ENCODE measurements at regions of chr7 and their contacts with region 1.

Region 1: GRCh38 chr7:135558337-135558767 is 635 bp downstream of the NUP205 start:
- DNase-seq: peak; percentile 89
- H3K4me3 Mint-ChIP-seq: no peak overlapping the region
- H3K27ac Mint-ChIP-seq: no peak overlapping the region
- H3K4me1 Mint-ChIP-seq: peaks cover 14% of the 10 kb centered on the region
- H3K27me3 Mint-ChIP-seq: peaks cover 2% of the 10 kb centered on the region

Region 2: GRCh38 chr7:134458806-134459698 is 1099.3 kb before region 1 on chr7 and contains the start of gene AKR1B1:
- intact Hi-C with region 1: loop called (anchors 5 kb)
- DNase-seq: peak; percentile 97
- H3K4me3 Mint-ChIP-seq: peak within 1 kb of the TSS; percentile 90
- H3K27ac Mint-ChIP-seq: peak within 1 kb of the TSS; percentile 83
- H3K4me1 Mint-ChIP-seq: peaks cover 39% of the 10 kb centered on the region
- H3K27me3 Mint-ChIP-seq: no peaks in the 10 kb centered on the region
- total RNA-seq, gene AKR1B1: 107 TPM in 2 replicates

Region 3: DNA sequence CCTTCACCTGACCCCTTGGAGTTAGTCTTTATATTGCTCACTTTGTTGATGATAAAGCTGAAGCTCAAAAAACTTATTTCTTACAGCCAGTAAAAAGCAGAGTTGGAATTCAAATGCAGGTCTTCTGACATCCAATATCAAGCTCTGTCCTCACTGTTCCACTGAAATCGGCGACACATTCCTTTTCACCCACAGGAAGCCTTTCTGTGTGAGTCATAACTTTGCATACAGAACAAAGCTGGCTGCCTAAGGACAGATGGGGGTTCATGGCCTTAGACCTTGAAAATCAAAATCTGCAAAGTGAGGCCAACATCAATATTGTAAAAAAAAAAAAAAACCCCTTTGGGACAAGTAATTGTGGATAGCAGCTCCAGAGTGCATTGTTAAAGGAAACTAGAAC is 1077.6 kb before region 1 on chr7:
- intact Hi-C with region 1: no loop called
- DNase-seq: no peak
- H3K4me3 Mint-ChIP-seq: no peak overlapping the region
- H3K27ac Mint-ChIP-seq: no peak overlapping the region
- H3K4me1 Mint-ChIP-seq: peaks cover 3% of the 10 kb centered on the region
- H3K27me3 Mint-ChIP-seq: peaks cover 10% of the 10 kb centered on the region

Region 4: DNA sequence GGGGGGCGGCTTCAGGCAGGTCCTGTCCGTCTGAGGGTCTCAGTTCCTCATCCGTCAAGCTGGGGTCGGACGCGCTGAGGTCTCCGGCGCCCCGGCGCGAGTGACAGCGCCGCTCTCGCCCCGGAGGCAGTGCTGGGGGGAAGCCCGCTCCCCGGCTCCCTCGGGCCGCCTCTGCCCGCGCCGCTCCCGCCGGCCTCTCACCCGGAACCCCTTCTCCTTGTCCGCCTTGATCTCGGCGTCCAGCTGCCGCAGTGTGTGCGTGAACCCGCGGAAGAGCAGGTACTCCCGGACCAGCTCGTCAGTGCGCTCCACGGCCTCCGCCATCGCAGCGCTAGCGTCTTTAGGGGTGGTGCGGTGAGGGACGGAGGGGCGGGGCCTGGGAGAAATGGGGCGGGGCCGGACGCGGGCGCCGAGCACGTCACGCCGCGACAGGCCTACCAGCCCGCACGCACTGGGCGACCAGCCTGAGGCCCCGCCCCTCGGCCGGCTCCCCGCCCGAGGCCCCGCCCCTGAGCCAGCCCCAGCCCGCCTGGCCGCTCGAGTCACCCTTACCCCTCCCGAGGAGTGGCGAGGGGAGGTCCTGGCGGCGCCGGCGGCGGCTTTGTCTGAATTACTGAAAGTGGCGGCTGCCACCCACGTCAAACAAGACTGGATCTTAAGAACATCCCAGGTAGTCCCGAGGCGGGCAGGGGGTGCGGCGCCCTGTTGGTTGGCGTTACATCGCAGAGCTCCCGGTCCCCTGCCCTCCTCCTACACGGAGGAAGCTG is 347.0 kb before region 1 on chr7 and contains the start of gene WDR91:
- intact Hi-C with region 1: loop called (anchors 2 kb)
- DNase-seq: peak; percentile 96
- H3K4me3 Mint-ChIP-seq: peak within 1 kb of the TSS; percentile 95
- H3K27ac Mint-ChIP-seq: peak within 1 kb of the TSS; percentile 98
- H3K4me1 Mint-ChIP-seq: peaks cover 29% of the 10 kb centered on the region
- H3K27me3 Mint-ChIP-seq: no peaks in the 10 kb centered on the region
- total RNA-seq, gene WDR91: 25.8 and 26.6 TPM in 2 replicates

Region 5: DNA sequence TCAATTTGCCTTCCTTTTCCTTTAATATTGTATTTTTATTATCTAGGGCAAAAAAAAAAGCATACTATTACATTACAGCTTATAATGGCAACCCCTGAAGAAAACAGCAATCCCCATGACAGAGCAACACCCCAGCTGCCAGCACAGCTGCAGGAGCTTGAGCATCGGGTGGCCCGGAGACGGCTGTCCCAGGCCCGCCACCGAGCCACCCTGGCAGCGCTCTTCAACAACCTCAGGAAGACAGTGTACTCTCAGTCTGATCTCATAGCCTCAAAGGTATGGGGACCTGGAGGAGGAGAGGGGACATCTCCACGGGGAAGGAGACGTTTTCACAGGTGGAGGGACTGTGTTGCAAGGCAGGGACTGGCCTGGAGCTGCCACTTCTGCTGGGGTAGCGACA is 317.9 kb before region 1 on chr7:
- intact Hi-C with region 1: no loop called
- DNase-seq: no peak
- H3K4me3 Mint-ChIP-seq: no peak overlapping the region
- H3K27ac Mint-ChIP-seq: no peak overlapping the region
- H3K4me1 Mint-ChIP-seq: peaks cover 9% of the 10 kb centered on the region
- H3K27me3 Mint-ChIP-seq: peaks cover 10% of the 10 kb centered on the region

Region 6: GRCh38 chr7:135281363-135281949 is 276.9 kb before region 1 on chr7:
- intact Hi-C with region 1: loop called (anchors 1 kb)
- DNase-seq: peak; percentile 93
- H3K4me3 Mint-ChIP-seq: no peak overlapping the region
- H3K27ac Mint-ChIP-seq: no peak overlapping the region
- H3K4me1 Mint-ChIP-seq: peaks cover 13% of the 10 kb centered on the region
- H3K27me3 Mint-ChIP-seq: peaks cover 10% of the 10 kb centered on the region

Region 7: DNA sequence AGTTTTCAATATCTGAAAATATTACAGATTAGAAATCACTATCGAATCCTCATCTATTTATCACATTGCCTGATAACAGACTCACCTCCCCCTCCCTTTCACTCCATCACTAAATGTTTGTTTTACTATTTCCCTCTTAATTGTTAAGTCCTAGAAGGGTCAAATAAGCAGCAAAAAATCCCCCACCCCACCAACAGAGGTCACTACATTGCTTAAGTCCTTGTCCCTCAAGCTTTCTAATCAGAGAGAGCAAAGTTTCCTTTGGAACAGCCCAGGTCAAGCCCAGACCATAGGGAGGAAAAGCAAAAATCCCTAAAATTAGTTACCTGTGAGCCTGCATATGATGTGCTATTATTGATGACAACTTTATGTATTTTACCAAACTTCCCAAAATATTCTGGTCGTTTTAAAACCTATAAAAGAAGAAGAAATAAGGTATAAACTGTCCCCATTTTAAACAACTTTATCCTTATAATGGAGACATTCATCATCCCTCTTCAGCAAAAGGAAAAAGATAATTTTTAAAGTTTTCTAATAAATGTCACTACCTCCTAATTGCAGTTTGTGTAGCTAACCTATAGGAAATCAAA is 143.4 kb before region 1 on chr7:
- intact Hi-C with region 1: loop called (anchors 2 kb)
- DNase-seq: peak; percentile 69
- H3K4me3 Mint-ChIP-seq: no peak overlapping the region
- H3K27ac Mint-ChIP-seq: no peak overlapping the region
- H3K4me1 Mint-ChIP-seq: peaks cover 5% of the 10 kb centered on the region
- H3K27me3 Mint-ChIP-seq: no peaks in the 10 kb centered on the region

Region 8: GRCh38 chr7:135662373-135663114 is 104.2 kb after region 1 on chr7 and contains the start of gene STMP1:
- intact Hi-C with region 1: loop called (anchors 1 kb)
- DNase-seq: peak; percentile 99
- H3K4me3 Mint-ChIP-seq: peak within 1 kb of the TSS; percentile 94
- H3K27ac Mint-ChIP-seq: peak within 1 kb of the TSS; percentile 91
- H3K4me1 Mint-ChIP-seq: peaks cover 33% of the 10 kb centered on the region
- H3K27me3 Mint-ChIP-seq: no peaks in the 10 kb centered on the region
- total RNA-seq, gene STMP1: 23.5 and 25.8 TPM in 2 replicates

Region 9: DNA sequence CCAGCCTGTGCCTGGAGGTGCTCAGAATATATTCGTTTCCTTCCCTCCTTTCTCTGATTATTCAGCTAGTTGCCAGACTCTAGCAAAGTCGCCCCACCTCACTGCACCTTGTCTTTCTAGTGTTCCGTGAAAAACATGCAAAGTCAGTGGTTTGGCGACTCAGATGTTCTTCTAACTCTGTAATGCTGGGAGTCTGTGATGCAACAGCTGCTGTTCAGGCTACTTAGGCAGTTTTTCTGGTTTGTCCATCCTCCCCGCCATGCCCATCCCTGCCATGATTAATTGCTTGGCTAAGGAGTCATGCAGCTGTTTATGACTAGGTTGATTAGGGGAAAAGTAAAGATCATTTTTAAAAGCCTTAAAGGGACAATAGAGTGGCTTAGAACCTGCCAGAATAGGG is 319.5 kb after region 1 on chr7:
- intact Hi-C with region 1: no loop called
- DNase-seq: no peak
- H3K4me3 Mint-ChIP-seq: no peak overlapping the region
- H3K27ac Mint-ChIP-seq: no peak overlapping the region
- H3K4me1 Mint-ChIP-seq: no peaks in the 10 kb centered on the region
- H3K27me3 Mint-ChIP-seq: peaks cover 2% of the 10 kb centered on the region

Region 10: DNA sequence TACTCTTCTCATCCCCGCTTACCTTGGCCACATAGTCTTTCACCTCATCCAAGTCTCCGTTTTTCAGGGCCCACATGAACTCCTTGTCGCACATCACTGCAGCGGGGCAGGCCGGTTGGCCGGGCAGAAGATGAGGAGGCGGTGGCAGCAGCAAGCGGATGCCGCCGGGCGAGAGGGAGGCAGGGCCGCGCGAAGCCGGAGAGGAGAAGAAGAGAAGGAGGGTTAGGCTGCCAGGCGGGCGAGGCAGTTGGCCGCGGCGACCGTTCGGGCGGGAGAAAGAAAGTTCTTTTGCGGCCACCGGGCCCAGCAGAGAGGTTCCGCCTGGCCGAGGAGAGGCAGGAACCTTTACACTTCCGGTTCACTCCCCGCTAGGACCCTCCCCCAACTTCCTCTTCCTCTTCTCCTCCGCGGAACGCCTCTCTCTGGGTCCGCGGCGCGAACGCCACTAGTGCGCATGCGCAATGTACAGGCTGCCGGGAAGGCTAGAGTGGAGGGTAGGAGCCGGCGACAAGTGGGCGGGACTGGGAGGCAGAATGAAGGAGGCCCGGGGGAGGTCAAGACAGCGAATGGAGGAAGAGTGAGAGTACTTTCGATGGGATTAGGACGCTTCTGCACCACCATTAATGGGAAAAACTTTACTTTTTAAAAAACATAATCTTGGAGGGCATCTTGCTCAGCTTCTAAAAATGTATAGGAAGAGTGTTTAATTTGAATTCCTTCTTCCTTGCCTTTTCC is 418.8 kb after region 1 on chr7 and contains the start of gene MTPN:
- intact Hi-C with region 1: loop called (anchors 1 kb)
- DNase-seq: peak; percentile 99
- H3K4me3 Mint-ChIP-seq: peak within 1 kb of the TSS; percentile 95
- H3K27ac Mint-ChIP-seq: peak within 1 kb of the TSS; percentile 86
- H3K4me1 Mint-ChIP-seq: peaks cover 61% of the 10 kb centered on the region
- H3K27me3 Mint-ChIP-seq: no peaks in the 10 kb centered on the region
- total RNA-seq, gene MTPN: 121 and 126 TPM in 2 replicates